PC-9 (cell line): ENCODE measurements at regions of chr2 and their contacts with region 1.

Region 1: DNA sequence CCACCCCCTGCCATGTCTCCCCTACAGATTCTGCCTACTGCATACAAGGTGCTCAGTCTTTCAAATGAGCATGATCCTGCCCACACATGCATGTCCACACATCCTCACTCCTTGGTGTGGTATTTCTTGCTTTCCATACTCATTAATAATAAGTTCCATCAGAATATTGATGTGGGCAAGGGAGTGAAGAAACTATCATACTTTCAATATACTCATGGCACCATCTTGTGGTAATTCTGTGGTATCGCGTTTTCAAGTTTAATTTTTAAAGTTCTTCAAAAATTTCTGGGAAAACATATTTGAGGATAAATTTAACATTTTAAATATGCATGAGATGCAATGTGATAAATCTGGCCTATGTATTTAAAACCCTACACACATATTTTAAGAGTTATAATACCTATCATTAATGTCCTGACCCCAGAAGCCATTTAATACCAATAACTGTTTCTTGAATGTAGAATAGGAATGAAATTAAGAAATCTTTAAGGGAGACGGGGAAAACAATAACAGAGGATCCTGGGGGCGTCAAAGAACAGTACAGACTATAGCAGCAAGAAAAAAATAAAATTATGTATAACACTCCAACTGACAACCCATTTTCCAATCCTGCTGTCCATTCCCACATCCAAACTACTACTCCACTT is 110.1 kb downstream of the ZNF385B start:
- DNase-seq: peak in 1 of 2 experiments; percentile 10
- H3K4me3 ChIP-seq: no peak overlapping the region
- H3K27ac ChIP-seq: no peak overlapping the region
- H3K4me1 ChIP-seq: no peaks in the 10 kb centered on the region
- H3K27me3 ChIP-seq: no peaks in the 10 kb centered on the region
- CTCF ChIP-seq: peak; percentile 97

Region 2: DNA sequence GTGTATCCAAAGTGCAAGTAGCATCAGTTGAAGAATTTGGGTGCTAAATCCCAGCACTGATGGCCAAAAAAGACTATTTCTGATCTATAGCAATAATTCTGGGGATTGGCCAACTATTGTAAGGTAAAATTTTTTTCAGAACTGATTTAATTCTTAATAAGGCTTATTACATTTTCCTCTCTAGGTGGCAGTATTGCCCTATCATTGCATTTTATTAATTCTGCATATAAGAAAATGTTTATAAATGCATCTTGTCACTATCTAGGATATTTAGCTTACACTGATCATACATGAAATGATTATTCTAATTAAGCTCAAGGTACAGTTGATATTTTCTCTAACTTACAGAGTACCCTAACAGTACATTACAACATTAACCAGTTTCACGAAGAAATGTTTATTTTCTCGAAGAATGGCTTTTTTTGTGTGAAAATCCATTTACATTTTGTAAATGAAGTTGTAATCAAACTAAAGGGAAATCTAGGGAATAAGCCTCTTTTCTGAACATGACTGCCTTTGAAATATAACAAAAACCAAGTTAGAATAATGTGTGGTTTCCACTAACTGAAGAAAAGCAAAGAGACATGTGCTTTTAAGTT is 955.1 kb before region 1 on chr2:
- CTCF ChIA-PET with region 1: interaction called, 3 read pairs
- POLR2A ChIA-PET with region 1: no interaction called
- intact Hi-C with region 1: loop called (anchors 1 kb)
- DNase-seq: peak in 1 of 2 experiments; percentile 65
- H3K4me3 ChIP-seq: no peak overlapping the region
- H3K27ac ChIP-seq: no peak overlapping the region
- H3K4me1 ChIP-seq: no peaks in the 10 kb centered on the region
- H3K27me3 ChIP-seq: no peaks in the 10 kb centered on the region
- CTCF ChIP-seq: peak; percentile 97

Region 3: GRCh38 chr2:179218848-179219594 is 532.3 kb before region 1 on chr2:
- CTCF ChIA-PET with region 1: no interaction called
- POLR2A ChIA-PET with region 1: no interaction called
- intact Hi-C with region 1: loop called (anchors 1 kb)
- DNase-seq: peak; percentile 48 to 71
- H3K4me3 ChIP-seq: no peak overlapping the region
- H3K27ac ChIP-seq: no peak overlapping the region
- H3K4me1 ChIP-seq: peaks cover 15% of the 10 kb centered on the region; the same call in 1 of the 2 replicates
- H3K27me3 ChIP-seq: no peaks in the 10 kb centered on the region
- CTCF ChIP-seq: peak; percentile 99

Region 4: DNA sequence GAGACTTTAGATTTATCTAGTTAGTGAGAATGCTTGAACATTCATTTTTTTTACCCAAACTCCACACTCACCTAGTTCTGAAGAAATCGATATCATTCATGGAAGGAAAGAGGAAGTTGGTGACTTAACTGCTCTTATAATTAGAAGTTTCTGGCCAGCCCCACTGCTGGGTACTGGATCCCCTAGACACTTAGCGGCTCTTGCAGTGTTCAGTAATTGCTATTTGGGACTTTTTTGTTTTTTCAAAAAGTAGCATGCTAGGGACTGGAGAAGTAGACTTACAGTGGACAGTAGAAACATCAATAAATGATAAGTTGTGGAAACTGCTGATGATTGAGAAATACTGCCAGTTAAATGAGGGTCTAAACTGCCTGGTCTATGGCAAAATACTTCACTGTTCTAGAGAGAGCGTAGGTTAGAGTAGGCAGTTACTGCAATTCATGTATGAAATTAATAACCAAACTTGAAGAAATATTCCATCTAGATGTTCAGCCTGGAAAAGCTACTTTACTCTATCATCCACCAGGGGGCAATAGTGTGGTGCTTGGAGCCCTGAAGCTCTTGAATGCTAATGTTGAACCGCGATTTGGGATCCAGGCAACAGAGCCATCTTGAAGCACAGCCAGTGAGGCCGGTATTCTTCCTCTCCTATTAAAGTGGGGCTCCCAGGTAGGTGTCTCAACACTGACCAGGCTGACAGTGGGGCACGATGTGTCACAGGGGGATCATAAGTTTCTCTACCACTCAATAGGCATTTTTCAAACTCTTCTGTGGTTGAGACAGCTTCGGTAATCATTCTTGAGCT is 340.5 kb before region 1 on chr2:
- CTCF ChIA-PET with region 1: no interaction called
- POLR2A ChIA-PET with region 1: no interaction called
- intact Hi-C with region 1: loop called (anchors 1 kb)
- DNase-seq: peak; percentile 44 to 50
- H3K4me3 ChIP-seq: no peak overlapping the region
- H3K27ac ChIP-seq: no peak overlapping the region
- H3K4me1 ChIP-seq: no peaks in the 10 kb centered on the region
- H3K27me3 ChIP-seq: no peaks in the 10 kb centered on the region
- CTCF ChIP-seq: peak; percentile 82

Region 5: DNA sequence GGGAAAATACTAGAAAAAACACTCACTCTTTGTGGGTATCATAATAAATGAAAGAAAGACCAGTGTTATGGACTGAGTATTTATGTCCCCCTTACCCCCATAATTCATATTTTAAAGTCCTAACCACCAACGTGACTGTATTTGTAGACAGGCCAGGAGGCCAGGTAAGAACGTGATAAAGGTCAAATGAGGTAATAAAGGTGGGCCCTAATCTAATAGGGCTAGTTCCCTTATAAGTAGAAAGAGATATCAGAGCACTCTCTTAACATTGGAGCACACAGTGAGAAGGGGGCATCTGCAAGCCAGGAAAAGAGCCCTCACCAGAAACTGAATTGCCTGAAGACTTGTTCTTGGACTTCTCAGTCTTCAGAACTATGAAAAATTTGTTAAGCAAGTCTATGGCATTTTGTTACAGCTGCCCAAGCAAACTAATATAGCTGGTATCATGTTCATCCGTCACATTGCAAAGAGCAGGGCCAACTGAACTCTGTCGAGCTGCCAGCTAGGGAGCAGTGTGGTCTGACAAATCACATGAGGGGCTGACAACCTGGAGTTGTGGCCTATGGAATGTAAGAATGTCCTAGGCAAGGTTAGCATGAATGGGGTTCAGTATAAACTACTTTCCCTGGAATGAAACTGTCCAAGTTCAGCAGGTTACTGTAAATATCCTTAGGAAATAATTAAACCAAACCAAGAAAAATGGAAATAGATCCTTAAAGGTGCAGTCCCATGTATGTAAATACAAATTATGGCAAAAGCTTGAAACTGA is 170.7 kb before region 1 on chr2:
- CTCF ChIA-PET with region 1: no interaction called
- POLR2A ChIA-PET with region 1: no interaction called
- intact Hi-C with region 1: loop called (anchors 1 kb)
- DNase-seq: no peak
- H3K4me3 ChIP-seq: no peak overlapping the region
- H3K27ac ChIP-seq: no peak overlapping the region
- H3K4me1 ChIP-seq: no peaks in the 10 kb centered on the region
- H3K27me3 ChIP-seq: no peaks in the 10 kb centered on the region
- CTCF ChIP-seq: no peak

Region 6: GRCh38 chr2:179612108-179612507 is 139.2 kb before region 1 on chr2:
- CTCF ChIA-PET with region 1: no interaction called
- POLR2A ChIA-PET with region 1: interaction called, 3 read pairs
- intact Hi-C with region 1: loop called (anchors 1 kb)
- DNase-seq: no peak
- H3K4me3 ChIP-seq: no peak overlapping the region
- H3K27ac ChIP-seq: no peak overlapping the region
- H3K4me1 ChIP-seq: no peaks in the 10 kb centered on the region
- H3K27me3 ChIP-seq: no peaks in the 10 kb centered on the region
- CTCF ChIP-seq: no peak